ENCODE measurements at regions of chr6 and their contacts with region 1.

Region 1: DNA sequence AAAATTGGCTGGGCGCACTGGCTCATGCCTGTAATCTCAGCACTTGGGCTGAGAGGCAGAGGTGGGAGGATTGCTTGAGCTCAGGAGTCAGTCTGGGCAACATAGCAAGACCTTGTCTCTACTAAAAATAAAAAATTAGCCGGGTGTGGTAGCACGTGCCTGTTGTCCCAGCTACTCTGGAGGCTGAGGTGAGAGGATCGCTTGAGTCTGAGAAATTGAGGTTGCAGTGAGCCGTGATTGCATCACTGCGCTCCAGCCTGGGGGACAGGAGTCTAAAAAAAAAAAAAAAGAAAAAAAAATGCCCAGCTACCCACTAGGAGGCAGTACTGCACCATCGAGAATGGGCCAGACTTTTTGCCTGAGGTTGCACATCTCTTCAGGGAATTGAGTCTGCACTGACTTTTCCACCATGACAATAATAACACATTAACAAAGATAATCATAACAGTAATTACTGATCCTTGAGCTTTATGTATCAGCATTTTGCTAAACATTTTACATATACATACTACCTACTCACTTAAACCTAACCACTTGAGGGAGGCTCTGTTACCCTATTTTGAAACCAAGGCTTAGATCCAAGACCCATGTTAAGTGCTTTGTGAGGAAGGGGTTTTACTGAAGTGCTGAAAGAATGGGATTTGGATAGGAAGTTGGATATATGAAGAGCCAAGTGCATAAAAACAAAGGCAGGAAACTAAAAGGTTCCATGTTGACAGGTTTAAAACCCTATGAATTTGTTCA is 21.0 kb downstream of the SRSF3 start:
- DNase-seq: peak; percentile 40
- H3K4me3 ChIP-seq: no peak overlapping the region
- H3K27ac ChIP-seq: no peak overlapping the region
- H3K4me1 ChIP-seq: peaks cover 9% of the 10 kb centered on the region
- H3K27me3 ChIP-seq: no peaks in the 10 kb centered on the region
- CTCF ChIP-seq: peak; percentile 77

Region 2: DNA sequence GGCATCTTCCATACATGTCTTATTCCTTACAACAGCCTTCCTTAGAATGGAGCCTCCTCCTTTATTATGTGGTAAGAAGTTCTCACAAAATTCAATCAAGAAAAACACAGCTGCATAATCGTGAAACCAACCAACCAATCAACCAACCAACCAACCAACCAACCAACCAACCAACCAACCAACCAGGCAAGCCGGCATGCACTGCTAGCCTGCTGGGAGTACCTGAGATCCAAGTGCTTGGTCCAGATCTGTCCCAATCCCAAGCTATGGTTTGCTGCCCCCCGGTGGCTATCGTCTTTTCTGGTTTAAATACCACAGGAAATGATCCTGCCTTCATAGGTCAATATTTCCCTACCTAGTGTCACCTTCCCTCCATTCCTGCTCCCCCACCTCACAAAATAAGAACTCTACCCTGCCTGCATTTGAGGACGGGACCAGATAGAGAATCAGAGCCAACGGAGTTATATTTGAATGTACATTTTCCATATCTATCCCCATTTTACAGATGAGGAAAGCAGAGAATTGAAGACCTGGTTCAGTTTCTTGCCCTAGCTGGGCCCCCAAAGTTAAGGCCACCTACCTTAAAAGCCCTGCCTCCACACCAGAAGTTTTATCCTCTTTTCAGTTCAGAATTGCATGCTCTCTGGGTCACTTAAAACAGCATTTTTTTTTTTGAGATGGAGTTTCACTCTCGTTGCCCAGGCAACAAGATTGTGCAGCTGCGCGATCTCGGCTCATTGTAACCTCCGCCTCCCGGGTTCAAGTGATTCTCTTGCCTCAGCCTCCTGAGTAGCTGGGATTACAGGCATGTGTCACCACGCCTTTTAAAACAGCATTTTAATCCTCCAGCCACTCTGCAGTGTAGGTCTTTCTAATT is 109.6 kb after region 1 on chr6:
- intact Hi-C with region 1: loop called (anchors 10 kb)
- DNase-seq: peak; percentile 92
- H3K4me3 ChIP-seq: no peak overlapping the region
- H3K27ac ChIP-seq: no peak overlapping the region
- H3K4me1 ChIP-seq: no peaks in the 10 kb centered on the region
- H3K27me3 ChIP-seq: no peaks in the 10 kb centered on the region
- CTCF ChIP-seq: peak; percentile 34